Aorta (tissue), 5 donors: ENCODE measurements at regions of chr9 and their contacts with region 1.

Region 1: DNA sequence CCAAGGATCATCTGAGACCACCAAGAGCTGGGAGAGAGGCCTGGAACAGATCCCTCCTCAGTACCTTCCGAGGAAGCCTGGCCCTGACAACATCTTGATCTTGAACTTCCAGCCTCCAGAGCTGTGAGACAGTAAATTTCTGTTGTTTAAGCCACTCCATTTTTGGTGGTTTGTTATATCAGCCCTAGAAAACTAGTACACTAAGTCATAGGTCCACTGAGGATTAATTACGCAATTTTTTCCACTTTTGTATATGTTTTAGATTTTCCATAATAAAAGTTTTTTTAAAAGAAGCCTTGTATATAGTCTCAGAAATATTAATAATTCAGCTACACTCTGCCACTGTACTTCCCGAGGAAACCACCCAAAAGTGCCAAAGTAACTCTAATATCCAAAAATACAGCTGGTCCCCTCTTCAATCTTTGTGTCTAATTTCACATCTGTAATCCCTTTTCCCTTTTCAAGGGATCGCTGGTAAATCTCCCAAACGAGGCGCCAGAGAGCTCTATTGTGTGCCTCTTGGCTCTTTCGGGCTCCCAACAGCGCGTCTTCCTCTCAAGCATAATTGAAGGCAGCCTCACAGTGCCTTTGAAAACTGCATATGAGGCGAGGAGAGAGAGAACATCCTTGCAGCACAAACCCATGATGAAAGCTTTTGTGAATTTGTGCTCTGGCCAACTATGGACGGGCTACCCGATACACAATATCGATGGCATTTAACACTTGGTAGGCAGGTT is 32.7 kb downstream of the PRUNE2 start:
- DNase-seq: no peak
- ATAC-seq: peak; percentile 55
- H3K4me3 ChIP-seq: no peak overlapping the region
- H3K27ac ChIP-seq: peak overlapping the region; percentile 68 to 94
- H3K4me1 ChIP-seq: peaks cover 9 to 22% of the 10 kb centered on the region in 2 donors
- H3K27me3 ChIP-seq: no peaks in the 10 kb centered on the region

Region 2: GRCh38 chr9:76912631-76913275 is 39.5 kb after region 1 on chr9:
- intact Hi-C with region 1: loop called in 1 of 2 experiments (anchors 5 kb)
- DNase-seq: no peak
- ATAC-seq: no peak
- H3K4me3 ChIP-seq: no peak overlapping the region
- H3K27ac ChIP-seq: no peak overlapping the region
- H3K4me1 ChIP-seq: peaks cover 0 to 1% of the 10 kb centered on the region in 2 donors
- H3K27me3 ChIP-seq: no peaks in the 10 kb centered on the region

Region 3: GRCh38 chr9:76943054-76943453 is 69.8 kb after region 1 on chr9:
- intact Hi-C with region 1: no loop called
- DNase-seq: no peak
- ATAC-seq: no peak
- H3K4me3 ChIP-seq: no peak overlapping the region
- H3K27ac ChIP-seq: no peak overlapping the region
- H3K4me1 ChIP-seq: peaks cover 0 to 2% of the 10 kb centered on the region in 2 donors
- H3K27me3 ChIP-seq: no peaks in the 10 kb centered on the region